ENCODE measurements at regions of chr10 and their contacts with region 1.

Region 1: DNA sequence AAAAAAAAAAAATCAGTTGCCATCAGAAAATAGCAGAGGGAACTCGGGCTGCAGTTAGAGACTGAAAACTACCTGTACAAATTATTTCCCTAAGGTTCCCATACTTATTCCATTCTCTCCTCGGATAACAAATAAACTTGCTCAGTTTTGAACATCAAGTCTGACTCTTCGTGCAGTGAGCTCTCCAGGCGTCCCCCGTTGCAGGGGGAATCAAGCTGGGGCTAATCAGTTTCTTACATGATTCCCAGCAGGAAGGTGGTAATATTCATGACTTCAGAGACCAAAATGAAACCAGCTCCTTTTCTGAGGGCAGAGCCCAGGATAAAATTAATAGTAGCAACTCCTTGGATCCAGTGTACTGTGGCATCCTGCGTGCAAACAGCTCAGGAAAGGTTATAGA is 135.3 kb downstream of the FRMD4A start:
- DNase-seq: no peak
- H3K4me3 ChIP-seq: no peak overlapping the region
- H3K27ac ChIP-seq: no peak overlapping the region
- H3K4me1 ChIP-seq: no peaks in the 10 kb centered on the region
- H3K27me3 ChIP-seq: no peaks in the 10 kb centered on the region
- CTCF ChIP-seq: no peak

Region 2: GRCh38 chr10:14405076-14406065 is 209.9 kb after region 1 on chr10:
- intact Hi-C with region 1: no loop called
- DNase-seq: no peak
- H3K4me3 ChIP-seq: peak overlapping the region in 1 of 2 donors; percentile 42
- H3K27ac ChIP-seq: peak overlapping the region in 1 of 2 donors; percentile 18
- H3K4me1 ChIP-seq: peaks cover 0 to 3% of the 10 kb centered on the region in 2 donors
- H3K27me3 ChIP-seq: no peaks in the 10 kb centered on the region
- CTCF ChIP-seq: no peak

Region 3: DNA sequence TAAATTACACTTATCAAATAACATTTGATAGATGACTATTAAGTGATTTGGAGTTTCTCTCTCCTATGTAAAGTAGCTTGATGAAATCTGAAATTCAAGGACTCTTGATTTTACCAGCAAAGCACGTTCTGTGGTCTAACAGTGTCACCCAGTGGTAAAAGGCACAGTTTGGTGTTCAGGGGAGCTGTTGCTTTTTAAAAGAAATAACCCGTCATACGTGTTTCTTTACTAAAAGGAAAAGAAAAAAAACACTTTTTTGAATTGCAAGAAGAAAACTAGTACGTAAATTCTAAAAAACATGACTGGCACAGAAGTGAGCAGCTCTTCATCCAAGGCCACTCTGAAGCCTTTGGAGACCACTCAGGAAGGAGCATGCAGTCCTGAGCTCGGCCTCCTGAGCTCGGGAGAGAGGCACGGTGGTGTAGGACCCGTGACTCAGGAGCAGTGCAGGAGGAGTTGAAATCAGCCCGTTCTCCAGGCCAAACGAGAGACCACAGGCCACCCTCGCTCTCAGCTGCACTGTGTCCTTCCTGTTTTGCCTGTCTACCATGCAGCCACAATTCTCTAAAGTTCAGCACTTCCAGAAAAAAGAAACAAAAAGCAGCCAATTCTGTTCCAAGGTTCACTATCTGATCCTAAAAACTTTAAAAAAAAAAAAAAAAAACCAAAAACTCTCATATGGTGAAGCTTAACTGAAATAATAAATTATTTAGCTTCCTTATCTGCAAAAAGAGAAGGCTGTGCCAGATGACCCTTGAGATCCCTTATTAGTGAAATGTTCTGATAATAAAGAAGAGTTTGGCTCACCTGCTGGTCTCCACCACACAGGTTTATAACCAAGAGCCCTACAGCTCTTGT is 347.8 kb after region 1 on chr10:
- intact Hi-C with region 1: loop called (anchors 5 kb)
- DNase-seq: peak in 1 of 2 donors; percentile 68
- H3K4me3 ChIP-seq: peak overlapping the region; percentile 35 to 46
- H3K27ac ChIP-seq: peak overlapping the region; percentile 3 to 55
- H3K4me1 ChIP-seq: peaks cover 0 to 3% of the 10 kb centered on the region in 2 donors
- H3K27me3 ChIP-seq: no peaks in the 10 kb centered on the region
- CTCF ChIP-seq: peak; percentile 42 to 65 (median 48)